Ovary (tissue), 10 donors: ENCODE measurements at regions of chr7 and their contacts with region 1.

Region 1: GRCh38 chr7:101743241-101743994 is 74.0 kb upstream of the CUX1 start:
- DNase-seq: peak; percentile 44 to 66 (median 56)
- H3K4me3 ChIP-seq: peak overlapping the region; percentile 44
- H3K27ac ChIP-seq: no peak overlapping the region
- H3K4me1 ChIP-seq: peaks cover 3% of the 10 kb centered on the region
- H3K27me3 ChIP-seq: no peaks in the 10 kb centered on the region
- CTCF ChIP-seq: peak; percentile 33 to 48 (median 39)
- EP300 ChIP-seq: no peak
- POLR2A ChIP-seq: no peak

Region 2: DNA sequence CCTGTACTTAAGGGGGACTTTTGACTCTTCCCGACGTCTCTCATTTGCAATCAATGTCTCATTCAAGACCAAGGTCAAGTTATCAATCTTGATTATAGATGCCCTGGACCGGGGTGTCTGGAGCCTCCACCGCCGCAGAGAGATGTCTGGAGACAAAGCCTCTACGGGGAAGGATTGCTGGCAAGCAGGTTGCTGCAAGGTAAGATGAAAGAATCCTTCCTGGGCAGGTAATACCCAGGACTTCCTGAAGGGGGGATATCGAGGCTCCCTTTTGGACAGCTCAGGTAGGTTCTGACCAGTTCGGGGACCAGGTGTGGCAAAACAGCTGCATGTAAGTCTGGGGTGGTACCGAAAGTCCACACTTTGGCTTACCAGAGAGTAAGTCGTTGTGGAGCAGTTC is 61.5 kb after region 1 on chr7:
- intact Hi-C with region 1: loop called in 1 of 4 experiments (anchors 10 kb)
- DNase-seq: no peak
- H3K4me3 ChIP-seq: no peak overlapping the region
- H3K27ac ChIP-seq: no peak overlapping the region
- H3K4me1 ChIP-seq: no peaks in the 10 kb centered on the region
- H3K27me3 ChIP-seq: no peaks in the 10 kb centered on the region
- CTCF ChIP-seq: no peak
- EP300 ChIP-seq: no peak
- POLR2A ChIP-seq: no peak